H1 (cell line): ENCODE measurements at regions of chr10 and their contacts with region 1.

Region 1: DNA sequence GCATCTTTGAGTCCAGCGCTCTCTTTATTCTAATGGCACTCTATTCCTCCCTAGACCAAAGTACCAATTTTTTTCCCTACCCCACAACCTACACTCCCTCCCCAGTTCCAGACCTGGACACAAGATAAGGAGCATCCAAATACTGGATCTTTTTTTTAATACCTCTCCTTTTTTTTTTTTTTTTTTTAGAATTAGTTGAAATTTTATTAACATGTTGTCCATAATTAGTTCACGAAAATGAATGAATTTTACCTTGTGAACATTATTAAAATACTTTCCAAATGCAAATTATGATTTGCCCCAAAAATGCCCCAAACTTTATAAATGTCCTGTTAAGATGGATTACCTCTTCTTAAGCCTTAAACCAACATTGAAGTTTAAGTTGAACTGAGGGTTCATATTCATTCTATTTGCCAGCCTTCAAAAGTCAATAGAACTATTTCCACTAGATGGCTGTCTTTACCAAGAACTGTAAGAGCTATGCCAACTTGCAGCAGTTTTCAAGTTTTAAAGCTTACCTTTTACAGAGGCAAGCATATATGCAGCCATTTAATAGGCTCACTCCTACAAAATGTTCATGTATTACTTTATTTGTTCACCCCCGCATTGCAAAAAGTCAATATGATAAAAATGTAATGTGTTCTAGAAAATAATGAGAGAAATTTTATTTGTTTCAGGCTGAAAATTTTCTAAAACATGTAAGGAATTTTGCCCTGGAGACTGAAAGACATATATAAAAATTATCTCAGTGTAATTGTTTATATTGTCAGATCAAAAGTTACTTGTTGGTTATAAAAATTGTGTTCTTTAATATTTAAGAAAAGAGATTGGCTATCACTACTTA is 39.7 kb upstream of the TNKS2 start:
- DNase-seq: no peak
- H3K4me3 ChIP-seq: no peak overlapping the region
- H3K27ac ChIP-seq: no peak overlapping the region
- H3K4me1 ChIP-seq: no peaks in the 10 kb centered on the region
- H3K27me3 ChIP-seq: no peaks in the 10 kb centered on the region
- CTCF ChIP-seq: peak in 2 of 3 experiments; percentile 64 to 66; a peak in 2 of 4 replicates
- EP300 ChIP-seq: no peak
- POLR2A ChIP-seq: no peak
- RAD21 ChIP-seq: peak; percentile 93 to 95

Region 2: DNA sequence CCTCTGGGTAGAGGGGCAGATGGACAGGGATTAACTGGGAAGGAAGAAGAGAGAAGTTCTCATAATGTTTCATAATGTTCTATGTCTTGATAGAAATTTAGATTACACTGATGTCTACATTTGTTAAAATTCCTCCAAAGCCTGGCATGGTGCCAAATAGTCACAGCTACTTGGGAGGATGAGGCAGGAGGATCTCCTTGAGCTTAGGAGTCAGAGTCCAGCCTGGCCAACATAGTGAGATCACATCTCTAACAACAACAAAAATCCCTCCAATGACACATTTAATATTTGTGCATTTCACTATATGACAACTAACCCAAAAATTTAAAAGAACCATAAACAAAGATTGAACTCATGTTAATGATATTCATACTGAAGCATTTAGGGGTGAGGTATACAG is 92.7 kb before region 1 on chr10:
- CTCF ChIA-PET with region 1: no interaction called
- POLR2A ChIA-PET with region 1: no interaction called
- DNase-seq: no peak
- H3K4me3 ChIP-seq: no peak overlapping the region
- H3K27ac ChIP-seq: no peak overlapping the region
- H3K4me1 ChIP-seq: peaks cover 0 to 2% (median 0%) of the 10 kb centered on the region in 4 experiments; a peak in 2 of 7 replicates
- H3K27me3 ChIP-seq: no peaks in the 10 kb centered on the region
- CTCF ChIP-seq: no peak
- EP300 ChIP-seq: no peak
- POLR2A ChIP-seq: no peak
- RAD21 ChIP-seq: no peak

Region 3: DNA sequence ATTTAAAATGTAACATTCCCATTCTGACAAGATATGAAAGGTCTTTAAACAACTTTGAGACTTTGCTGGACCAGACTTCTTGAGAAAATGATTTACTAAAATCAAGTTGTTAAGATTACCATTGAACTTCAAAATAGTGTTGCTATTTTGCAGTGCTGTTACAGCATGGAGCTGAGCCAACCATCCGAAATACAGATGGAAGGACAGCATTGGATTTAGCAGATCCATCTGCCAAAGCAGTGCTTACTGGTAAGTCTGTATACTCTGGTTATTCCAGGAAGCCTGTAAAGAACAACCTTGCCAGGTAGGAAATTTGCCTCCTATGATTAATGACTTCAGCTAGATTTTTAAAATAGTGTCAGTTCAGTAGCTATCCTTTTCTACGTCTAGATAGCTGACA is 58.5 kb after region 1 on chr10:
- CTCF ChIA-PET with region 1: interaction called, 26 read pairs
- POLR2A ChIA-PET with region 1: no interaction called
- DNase-seq: no peak
- H3K4me3 ChIP-seq: no peak overlapping the region
- H3K27ac ChIP-seq: no peak overlapping the region
- H3K4me1 ChIP-seq: no peaks in the 10 kb centered on the region
- H3K27me3 ChIP-seq: no peaks in the 10 kb centered on the region
- CTCF ChIP-seq: no peak
- EP300 ChIP-seq: no peak
- POLR2A ChIP-seq: no peak
- RAD21 ChIP-seq: no peak

Region 4: DNA sequence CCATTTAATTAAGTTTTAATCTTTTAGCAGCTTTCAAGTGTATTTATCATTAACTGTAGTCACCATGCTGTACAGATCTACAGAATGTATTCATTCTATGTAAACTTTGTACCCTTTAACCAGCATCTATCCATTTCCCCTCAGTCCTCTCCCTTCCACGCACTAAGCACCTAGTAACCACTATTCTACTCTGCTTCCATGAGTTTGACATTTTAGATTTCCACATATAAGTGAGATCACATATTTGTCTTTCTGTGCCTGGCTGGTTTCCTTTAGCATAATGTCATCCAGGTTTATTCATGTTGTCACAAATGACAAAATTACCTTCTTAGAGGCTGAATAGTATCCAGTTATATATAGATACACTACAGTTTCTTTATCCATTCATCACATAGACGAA is 244.7 kb after region 1 on chr10:
- CTCF ChIA-PET with region 1: no interaction called
- POLR2A ChIA-PET with region 1: no interaction called
- DNase-seq: no peak
- H3K4me3 ChIP-seq: no peak overlapping the region
- H3K27ac ChIP-seq: no peak overlapping the region
- H3K4me1 ChIP-seq: no peaks in the 10 kb centered on the region
- H3K27me3 ChIP-seq: no peaks in the 10 kb centered on the region
- CTCF ChIP-seq: no peak
- EP300 ChIP-seq: no peak
- POLR2A ChIP-seq: no peak
- RAD21 ChIP-seq: no peak